Natural killer cell (primary cell): ENCODE measurements at regions of chr14 and their contacts with region 1.

Region 1: GRCh38 chr14:101707068-101707842 is 54.3 kb upstream of the PPP2R5C start:
- DNase-seq: peak in 1 of 2 donors; percentile 94
- ATAC-seq: peak; percentile 69 to 86 (median 71)
- H3K4me3 ChIP-seq: no peak overlapping the region
- H3K4me3 Mint-ChIP-seq: peak overlapping the region; percentile 57
- H3K27ac ChIP-seq: peak overlapping the region; percentile 75
- H3K27ac Mint-ChIP-seq: peak overlapping the region; percentile 90
- H3K4me1 ChIP-seq: peaks cover 55% of the 10 kb centered on the region
- H3K4me1 Mint-ChIP-seq: peaks cover 46 to 67% of the 10 kb centered on the region in 2 donors
- H3K27me3 ChIP-seq: no peaks in the 10 kb centered on the region
- H3K27me3 Mint-ChIP-seq: peaks cover 2 to 9% of the 10 kb centered on the region in 2 donors
- CTCF ChIP-seq: peak; percentile 86

Region 2: GRCh38 chr14:101721951-101722661 is 14.9 kb after region 1 on chr14:
- intact Hi-C with region 1: loop called (anchors 2 kb)
- DNase-seq: peak; percentile 72 to 95
- ATAC-seq: peak; percentile 55 to 81 (median 70)
- H3K4me3 ChIP-seq: peak overlapping the region; percentile 10
- H3K4me3 Mint-ChIP-seq: peak overlapping the region; percentile 90
- H3K27ac ChIP-seq: peak overlapping the region; percentile 95
- H3K27ac Mint-ChIP-seq: peak overlapping the region; percentile 96 to 100
- H3K4me1 ChIP-seq: peaks cover 76% of the 10 kb centered on the region
- H3K4me1 Mint-ChIP-seq: peaks cover 70 to 72% of the 10 kb centered on the region in 2 donors
- H3K27me3 ChIP-seq: no peaks in the 10 kb centered on the region
- H3K27me3 Mint-ChIP-seq: no peaks in the 10 kb centered on the region
- CTCF ChIP-seq: no peak

Region 3: GRCh38 chr14:101774006-101774795 is 66.9 kb after region 1 on chr14:
- intact Hi-C with region 1: loop called (anchors 2 kb)
- DNase-seq: no peak
- ATAC-seq: no peak
- H3K4me3 ChIP-seq: no peak overlapping the region
- H3K4me3 Mint-ChIP-seq: no peak overlapping the region
- H3K27ac ChIP-seq: no peak overlapping the region
- H3K27ac Mint-ChIP-seq: peak overlapping the region; percentile 47 to 56
- H3K4me1 ChIP-seq: peaks cover 26% of the 10 kb centered on the region
- H3K4me1 Mint-ChIP-seq: peaks cover 40 to 57% of the 10 kb centered on the region in 2 donors
- H3K27me3 ChIP-seq: no peaks in the 10 kb centered on the region
- H3K27me3 Mint-ChIP-seq: peaks cover 0 to 2% of the 10 kb centered on the region in 2 donors
- CTCF ChIP-seq: no peak

Region 4: DNA sequence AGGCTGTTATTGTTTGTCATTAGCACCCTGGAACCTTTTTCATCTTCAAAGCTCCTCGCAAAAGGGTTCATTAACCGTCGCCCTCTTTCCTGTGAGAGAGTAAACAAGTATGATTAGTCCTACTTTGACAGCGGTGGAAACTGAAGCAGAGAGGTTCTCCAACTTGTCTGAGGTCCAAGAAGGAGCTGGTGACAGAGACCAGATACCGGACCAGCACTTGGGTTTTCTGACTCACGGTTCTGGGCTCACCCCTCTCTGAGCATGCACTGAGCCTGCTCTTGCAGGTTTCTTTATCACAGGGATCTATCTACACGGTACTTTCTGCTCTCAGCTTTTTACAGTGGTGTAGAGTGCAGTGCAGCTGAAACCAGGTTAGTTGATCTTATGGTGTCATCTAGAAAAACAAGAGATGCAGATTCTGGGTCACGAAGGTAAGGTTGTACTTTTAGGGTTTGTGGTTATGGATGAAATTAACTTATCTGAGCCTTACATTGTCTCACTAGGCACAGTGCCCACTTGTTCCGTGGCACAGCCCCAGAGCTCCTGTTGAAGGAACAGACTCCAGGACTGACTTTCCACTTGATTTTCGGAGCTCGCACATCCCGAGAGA is 116.4 kb after region 1 on chr14:
- intact Hi-C with region 1: no loop called
- DNase-seq: peak; percentile 63 to 88
- ATAC-seq: peak; percentile 47 to 70 (median 57)
- H3K4me3 ChIP-seq: peak overlapping the region; percentile 48
- H3K4me3 Mint-ChIP-seq: peak overlapping the region; percentile 81
- H3K27ac ChIP-seq: peak overlapping the region; percentile 98
- H3K27ac Mint-ChIP-seq: peak overlapping the region; percentile 97 to 99
- H3K4me1 ChIP-seq: peaks cover 75% of the 10 kb centered on the region
- H3K4me1 Mint-ChIP-seq: peaks cover 86 to 88% of the 10 kb centered on the region in 2 donors
- H3K27me3 ChIP-seq: no peaks in the 10 kb centered on the region
- H3K27me3 Mint-ChIP-seq: no peaks in the 10 kb centered on the region
- CTCF ChIP-seq: no peak

Region 5: GRCh38 chr14:101964297-101965144 is 257.3 kb after region 1 on chr14 and contains the start of gene DYNC1H1:
- intact Hi-C with region 1: loop called (anchors 1 kb)
- DNase-seq: peak; percentile 91 to 95
- ATAC-seq: peak; percentile 85 to 93 (median 89)
- H3K4me3 ChIP-seq: peak within 1 kb of the TSS; percentile 73
- H3K4me3 Mint-ChIP-seq: peak within 1 kb of the TSS; percentile 95
- H3K27ac ChIP-seq: peak within 1 kb of the TSS; percentile 84
- H3K27ac Mint-ChIP-seq: peak within 1 kb of the TSS; percentile 90 to 91
- H3K4me1 ChIP-seq: peaks cover 22% of the 10 kb centered on the region
- H3K4me1 Mint-ChIP-seq: peaks cover 35 to 45% of the 10 kb centered on the region in 2 donors
- H3K27me3 ChIP-seq: no peaks in the 10 kb centered on the region
- H3K27me3 Mint-ChIP-seq: peaks cover 0 to 2% of the 10 kb centered on the region in 2 donors
- CTCF ChIP-seq: no peak
- total RNA-seq, gene DYNC1H1: 313 to 381 (median 349) TPM

Region 6: DNA sequence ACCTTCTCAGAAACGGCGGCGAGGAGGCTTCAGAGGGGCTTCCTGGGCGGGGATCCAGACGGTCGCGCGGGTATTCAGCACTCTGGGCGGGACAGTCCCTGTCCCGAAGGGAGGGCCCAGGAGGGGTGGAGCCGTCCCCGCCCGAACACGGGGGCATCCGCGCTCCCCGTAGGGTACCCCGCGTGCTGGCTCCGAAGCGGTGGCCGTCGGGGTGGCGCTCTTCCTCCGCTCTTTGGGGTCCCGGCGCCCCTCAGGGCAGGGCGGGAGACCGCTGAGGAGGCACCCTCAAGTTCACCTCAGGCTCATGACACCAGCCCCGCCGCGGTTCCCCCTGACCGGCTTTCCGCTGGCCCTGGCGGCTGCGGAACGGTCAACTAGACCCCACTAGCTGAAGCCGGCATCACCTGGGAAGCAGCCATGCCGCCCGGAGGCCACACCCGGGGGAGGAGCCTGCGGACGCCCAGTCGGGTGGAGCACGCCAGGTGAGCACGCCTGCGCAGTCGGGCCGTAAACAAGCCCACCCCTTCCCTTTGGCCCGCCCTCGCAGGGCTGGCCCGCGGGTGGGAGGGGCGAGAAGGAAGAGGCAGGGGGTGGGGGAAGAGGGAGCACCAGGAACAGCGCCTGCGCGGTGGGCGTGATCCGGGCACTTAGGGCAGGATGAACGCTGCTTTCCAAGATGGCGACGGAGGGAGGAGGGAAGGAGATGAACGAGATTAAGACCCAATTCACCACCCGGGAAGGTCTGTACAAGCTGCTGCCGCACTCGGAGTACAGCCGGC is 432.2 kb after region 1 on chr14 and contains the start of gene WDR20:
- intact Hi-C with region 1: loop called (anchors 5 kb)
- DNase-seq: peak; percentile 95 to 100
- ATAC-seq: peak; percentile 94 to 99 (median 95)
- H3K4me3 ChIP-seq: peak within 1 kb of the TSS; percentile 99
- H3K4me3 Mint-ChIP-seq: peak within 1 kb of the TSS; percentile 96
- H3K27ac ChIP-seq: peak within 1 kb of the TSS; percentile 86
- H3K27ac Mint-ChIP-seq: peak within 1 kb of the TSS; percentile 92 to 96
- H3K4me1 ChIP-seq: peaks cover 14% of the 10 kb centered on the region
- H3K4me1 Mint-ChIP-seq: peaks cover 25 to 28% of the 10 kb centered on the region in 2 donors
- H3K27me3 ChIP-seq: no peaks in the 10 kb centered on the region
- H3K27me3 Mint-ChIP-seq: no peaks in the 10 kb centered on the region
- CTCF ChIP-seq: no peak
- total RNA-seq, gene WDR20: 55.5 to 66.7 (median 62.2) TPM